GM12878 (cell line): ENCODE measurements at regions of chr11 and their contacts with region 1.

Region 1: GRCh38 chr11:96389720-96390487 is at the starts of genes CCDC82 and JRKL:
- DNase-seq: peak; percentile 78
- ATAC-seq: peak; percentile 94
- H3K4me3 ChIP-seq: peak within 1 kb of the TSS; percentile 90
- H3K27ac ChIP-seq: peak within 1 kb of the TSS; percentile 78
- H3K4me1 ChIP-seq: no peaks in the 10 kb centered on the region
- H3K27me3 ChIP-seq: no peaks in the 10 kb centered on the region
- CTCF ChIP-seq: no peak
- EP300 ChIP-seq: no peak
- POLR2A ChIP-seq: peak; percentile 92
- RAD21 ChIP-seq: no peak
- polyA plus RNA-seq, gene CCDC82: 24.5 to 24.7 TPM
- polyA plus RNA-seq, gene JRKL: 4.6 to 4.8 TPM

Region 2: DNA sequence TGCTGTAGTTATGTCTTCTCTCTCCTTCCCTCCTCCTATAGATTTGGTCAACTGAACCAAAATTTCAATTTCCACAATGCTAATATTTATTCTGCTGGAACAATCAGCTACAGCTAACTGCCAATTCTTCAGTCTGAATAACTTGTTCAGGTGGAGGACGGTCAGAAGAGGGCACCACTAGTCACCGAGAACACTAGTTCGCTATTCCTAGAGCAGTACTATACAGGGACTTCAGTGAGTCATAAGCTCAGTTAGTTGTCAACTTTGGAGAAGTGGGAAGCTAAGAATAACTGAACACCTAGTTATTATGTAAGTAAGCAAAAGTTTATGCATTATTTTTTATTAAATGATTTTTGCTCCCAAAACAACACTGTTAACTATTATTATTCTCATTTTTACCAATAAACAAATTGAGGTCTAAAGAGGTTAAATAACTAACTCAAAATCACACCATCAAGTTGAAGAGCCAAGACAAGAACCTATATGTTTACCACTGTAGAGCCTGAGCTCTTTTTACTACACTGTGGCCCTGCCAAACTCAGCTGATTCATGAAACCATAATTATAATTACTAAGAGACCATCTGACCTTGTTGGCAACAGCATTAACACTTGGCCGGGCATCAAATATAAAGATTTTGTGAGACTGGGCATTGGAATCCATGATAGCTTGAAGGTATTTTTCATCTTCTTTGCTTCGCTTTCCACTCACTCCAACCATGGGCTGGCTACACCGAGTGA is 540.6 kb before region 1 on chr11:
- CTCF ChIA-PET with region 1: interaction called, 46 read pairs
- POLR2A ChIA-PET with region 1: no interaction called
- RAD21 ChIA-PET with region 1: interaction called, 24 read pairs
- SMC1A ChIA-PET with region 1: interaction called, 41 read pairs
- in situ Hi-C with region 1: no loop called
- intact Hi-C with region 1: loop called (anchors 1 kb)
- DNase-seq: no peak
- ATAC-seq: peak; percentile 80
- H3K4me3 ChIP-seq: no peak overlapping the region
- H3K27ac ChIP-seq: no peak overlapping the region
- H3K4me1 ChIP-seq: no peaks in the 10 kb centered on the region
- H3K27me3 ChIP-seq: no peaks in the 10 kb centered on the region
- CTCF ChIP-seq: peak; percentile 24 to 51 (median 44); a peak in 4 of 6 replicates
- EP300 ChIP-seq: no peak
- POLR2A ChIP-seq: no peak
- RAD21 ChIP-seq: peak; percentile 60

Region 3: DNA sequence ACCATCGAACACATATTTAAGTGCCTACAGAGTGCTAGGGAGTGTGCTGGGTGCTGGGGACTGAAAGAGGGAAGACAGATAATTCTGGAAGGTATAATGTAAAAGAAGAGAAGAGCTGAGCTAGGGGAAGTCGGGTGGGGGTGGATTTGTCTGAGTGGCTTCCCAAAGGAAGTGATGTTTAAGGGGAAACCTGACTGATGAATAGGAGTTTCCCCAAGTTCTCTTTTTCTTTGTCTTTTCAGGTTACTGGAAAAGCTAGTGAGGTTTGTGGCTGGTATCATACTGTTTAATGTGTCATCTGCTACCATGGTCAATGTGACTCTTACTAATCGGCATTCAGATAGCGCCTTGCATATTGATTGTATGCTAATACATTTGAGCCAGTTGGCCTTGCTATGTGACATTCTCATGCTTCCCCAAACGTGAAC is 314.4 kb before region 1 on chr11:
- CTCF ChIA-PET with region 1: interaction called, 6 read pairs
- POLR2A ChIA-PET with region 1: interaction called, 3 read pairs
- RAD21 ChIA-PET with region 1: interaction called, 5 read pairs
- SMC1A ChIA-PET with region 1: interaction called, 6 read pairs
- in situ Hi-C with region 1: no loop called
- intact Hi-C with region 1: loop called (anchors 5 kb)
- DNase-seq: peak; percentile 74
- ATAC-seq: peak; percentile 93
- H3K4me3 ChIP-seq: 0 out of 2 replicates have a peak overlapping the region, but pooled peaks have one; percentile 30
- H3K27ac ChIP-seq: peak overlapping the region; percentile 62
- H3K4me1 ChIP-seq: peaks cover 27% of the 10 kb centered on the region
- H3K27me3 ChIP-seq: no peaks in the 10 kb centered on the region
- CTCF ChIP-seq: no peak
- EP300 ChIP-seq: peak; percentile 17 to 36; a peak in 1 of 4 replicates
- POLR2A ChIP-seq: no peak
- RAD21 ChIP-seq: no peak

Region 4: GRCh38 chr11:96242971-96243647 is 146.8 kb before region 1 on chr11:
- CTCF ChIA-PET with region 1: interaction called, 9 read pairs
- POLR2A ChIA-PET with region 1: no interaction called
- RAD21 ChIA-PET with region 1: interaction called, 9 read pairs
- SMC1A ChIA-PET with region 1: interaction called, 4 read pairs
- in situ Hi-C with region 1: no loop called
- intact Hi-C with region 1: loop called (anchors 5 kb)
- DNase-seq: peak; percentile 86
- ATAC-seq: peak; percentile 93
- H3K4me3 ChIP-seq: peak overlapping the region; percentile 60
- H3K27ac ChIP-seq: peak overlapping the region; percentile 68
- H3K4me1 ChIP-seq: peaks cover 14% of the 10 kb centered on the region; the same call in 1 of the 2 replicates
- H3K27me3 ChIP-seq: no peaks in the 10 kb centered on the region
- CTCF ChIP-seq: no peak
- EP300 ChIP-seq: no peak
- POLR2A ChIP-seq: peak; percentile 73
- RAD21 ChIP-seq: no peak; the same call in 1 of the 2 replicates

Region 5: GRCh38 chr11:96412761-96413381 is 23.0 kb after region 1 on chr11:
- CTCF ChIA-PET with region 1: interaction called, 10 read pairs
- POLR2A ChIA-PET with region 1: no interaction called
- RAD21 ChIA-PET with region 1: interaction called, 3 read pairs
- SMC1A ChIA-PET with region 1: interaction called, 4 read pairs
- in situ Hi-C with region 1: no loop called
- intact Hi-C with region 1: no loop called
- DNase-seq: no peak
- ATAC-seq: peak; percentile 78
- H3K4me3 ChIP-seq: no peak overlapping the region
- H3K27ac ChIP-seq: no peak overlapping the region
- H3K4me1 ChIP-seq: no peaks in the 10 kb centered on the region
- H3K27me3 ChIP-seq: no peaks in the 10 kb centered on the region
- CTCF ChIP-seq: no peak
- EP300 ChIP-seq: no peak
- POLR2A ChIP-seq: no peak
- RAD21 ChIP-seq: no peak

Region 6: GRCh38 chr11:96472085-96472484 is 82.2 kb after region 1 on chr11:
- CTCF ChIA-PET with region 1: no interaction called
- POLR2A ChIA-PET with region 1: no interaction called
- RAD21 ChIA-PET with region 1: no interaction called
- SMC1A ChIA-PET with region 1: no interaction called
- in situ Hi-C with region 1: no loop called
- intact Hi-C with region 1: no loop called
- DNase-seq: no peak
- ATAC-seq: peak; percentile 85
- H3K4me3 ChIP-seq: no peak overlapping the region
- H3K27ac ChIP-seq: no peak overlapping the region
- H3K4me1 ChIP-seq: no peaks in the 10 kb centered on the region
- H3K27me3 ChIP-seq: no peaks in the 10 kb centered on the region
- CTCF ChIP-seq: peak; percentile 21 to 34 (median 25); a peak in 3 of 6 replicates
- EP300 ChIP-seq: no peak
- POLR2A ChIP-seq: no peak
- RAD21 ChIP-seq: no peak

Region 7: DNA sequence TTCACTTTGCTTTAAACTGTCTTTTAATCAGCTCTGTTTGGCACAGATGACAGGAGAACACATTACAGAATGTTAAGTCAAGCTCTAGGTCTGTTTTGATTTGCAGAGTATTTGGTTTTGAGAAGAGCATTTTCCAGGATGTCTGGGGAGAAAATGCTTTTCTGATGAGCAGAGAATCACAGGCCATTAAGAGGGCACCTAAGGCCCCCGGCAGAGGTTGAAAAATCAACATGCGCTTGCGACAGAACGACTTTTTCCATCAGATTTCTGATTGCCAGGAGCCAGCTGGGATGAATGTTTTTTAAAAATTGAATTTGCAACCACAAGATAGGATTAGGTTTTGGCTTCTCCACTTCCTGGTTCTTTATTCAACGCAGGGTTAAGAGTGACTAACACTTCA is 304.4 kb after region 1 on chr11:
- CTCF ChIA-PET with region 1: no interaction called
- POLR2A ChIA-PET with region 1: no interaction called
- RAD21 ChIA-PET with region 1: no interaction called
- SMC1A ChIA-PET with region 1: no interaction called
- in situ Hi-C with region 1: no loop called
- intact Hi-C with region 1: no loop called
- DNase-seq: no peak
- ATAC-seq: no peak
- H3K4me3 ChIP-seq: no peak overlapping the region
- H3K27ac ChIP-seq: no peak overlapping the region
- H3K4me1 ChIP-seq: no peaks in the 10 kb centered on the region
- H3K27me3 ChIP-seq: no peaks in the 10 kb centered on the region; a peak in 1 of 4 replicates
- CTCF ChIP-seq: no peak
- EP300 ChIP-seq: no peak
- POLR2A ChIP-seq: no peak
- RAD21 ChIP-seq: no peak